PC-3 (cell line): ENCODE measurements at regions of chr1 and their contacts with region 1.

Region 1: DNA sequence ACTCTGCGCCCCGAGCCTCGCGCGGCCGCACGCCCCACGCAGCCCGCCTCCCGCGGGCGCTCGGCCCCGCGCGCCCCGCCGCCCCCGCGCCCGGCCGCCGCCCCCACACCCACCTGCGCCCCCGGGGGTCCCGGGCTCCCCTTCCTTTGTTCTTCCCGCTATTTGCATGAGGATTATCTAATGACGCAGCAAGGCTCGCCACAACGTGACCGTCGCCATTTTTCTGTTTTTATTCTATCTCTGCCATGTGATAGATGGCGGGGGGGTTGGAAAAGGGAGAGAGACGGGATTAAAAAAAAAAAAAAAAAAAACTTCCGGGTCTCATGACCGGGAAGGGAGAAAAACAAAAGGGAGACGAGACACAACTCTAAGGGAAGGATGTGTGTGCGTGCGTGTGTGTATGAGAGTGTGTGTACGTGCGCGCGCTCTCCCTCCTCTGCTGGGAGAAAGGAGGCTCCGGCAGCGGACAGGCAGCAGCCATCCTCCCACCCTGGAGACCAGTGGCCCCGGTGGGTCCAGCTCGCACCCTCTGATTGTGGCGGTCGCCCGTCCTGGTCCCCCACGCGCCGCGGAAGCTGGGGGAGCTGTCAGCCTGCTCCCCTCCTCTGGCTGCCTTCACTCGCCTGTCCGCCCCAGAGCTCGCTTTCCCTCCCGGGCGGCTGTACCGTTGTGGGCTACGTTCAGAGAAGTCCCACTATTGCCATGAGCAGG is 80.4 kb upstream of the AK4 start:
- DNase-seq: peak; percentile 50
- ATAC-seq: peak; percentile 34
- H3K4me3 ChIP-seq: peak overlapping the region; percentile 79
- H3K27ac ChIP-seq: no peak overlapping the region
- H3K4me1 ChIP-seq: peaks cover 8% of the 10 kb centered on the region; the same call in 1 of the 2 replicates
- H3K27me3 ChIP-seq: no peaks in the 10 kb centered on the region
- CTCF ChIP-seq: no peak

Region 2: DNA sequence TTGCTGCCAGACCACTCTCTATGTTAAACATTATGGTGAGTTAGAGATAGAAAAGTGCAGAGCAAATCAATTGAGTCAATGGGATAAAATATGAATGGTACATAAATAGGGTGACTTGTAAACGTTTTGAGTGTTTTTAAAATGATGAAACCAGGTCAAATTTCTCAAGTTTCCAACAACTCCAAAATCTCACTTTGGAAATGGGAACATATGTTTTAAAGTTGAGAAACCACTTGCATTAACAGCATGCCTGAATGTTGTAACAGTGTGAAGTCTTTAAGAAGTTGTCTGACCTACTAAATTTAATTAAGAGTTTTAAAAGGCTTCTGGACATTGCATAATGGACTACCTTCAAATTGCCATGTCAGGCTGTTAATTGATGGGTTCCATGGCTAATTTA is 356.4 kb before region 1 on chr1:
- CTCF ChIA-PET with region 1: no interaction called
- POLR2A ChIA-PET with region 1: no interaction called
- intact Hi-C with region 1: no loop called
- DNase-seq: no peak
- ATAC-seq: no peak
- H3K4me3 ChIP-seq: no peak overlapping the region
- H3K27ac ChIP-seq: no peak overlapping the region
- H3K4me1 ChIP-seq: no peaks in the 10 kb centered on the region
- H3K27me3 ChIP-seq: no peaks in the 10 kb centered on the region
- CTCF ChIP-seq: no peak

Region 3: GRCh38 chr1:65243491-65243890 is 175.8 kb after region 1 on chr1:
- CTCF ChIA-PET with region 1: no interaction called
- POLR2A ChIA-PET with region 1: no interaction called
- intact Hi-C with region 1: no loop called
- DNase-seq: no peak
- ATAC-seq: no peak
- H3K4me3 ChIP-seq: no peak overlapping the region
- H3K27ac ChIP-seq: no peak overlapping the region
- H3K4me1 ChIP-seq: peaks cover 8% of the 10 kb centered on the region; the same call in 1 of the 2 replicates
- H3K27me3 ChIP-seq: no peaks in the 10 kb centered on the region
- CTCF ChIP-seq: no peak

Region 4: DNA sequence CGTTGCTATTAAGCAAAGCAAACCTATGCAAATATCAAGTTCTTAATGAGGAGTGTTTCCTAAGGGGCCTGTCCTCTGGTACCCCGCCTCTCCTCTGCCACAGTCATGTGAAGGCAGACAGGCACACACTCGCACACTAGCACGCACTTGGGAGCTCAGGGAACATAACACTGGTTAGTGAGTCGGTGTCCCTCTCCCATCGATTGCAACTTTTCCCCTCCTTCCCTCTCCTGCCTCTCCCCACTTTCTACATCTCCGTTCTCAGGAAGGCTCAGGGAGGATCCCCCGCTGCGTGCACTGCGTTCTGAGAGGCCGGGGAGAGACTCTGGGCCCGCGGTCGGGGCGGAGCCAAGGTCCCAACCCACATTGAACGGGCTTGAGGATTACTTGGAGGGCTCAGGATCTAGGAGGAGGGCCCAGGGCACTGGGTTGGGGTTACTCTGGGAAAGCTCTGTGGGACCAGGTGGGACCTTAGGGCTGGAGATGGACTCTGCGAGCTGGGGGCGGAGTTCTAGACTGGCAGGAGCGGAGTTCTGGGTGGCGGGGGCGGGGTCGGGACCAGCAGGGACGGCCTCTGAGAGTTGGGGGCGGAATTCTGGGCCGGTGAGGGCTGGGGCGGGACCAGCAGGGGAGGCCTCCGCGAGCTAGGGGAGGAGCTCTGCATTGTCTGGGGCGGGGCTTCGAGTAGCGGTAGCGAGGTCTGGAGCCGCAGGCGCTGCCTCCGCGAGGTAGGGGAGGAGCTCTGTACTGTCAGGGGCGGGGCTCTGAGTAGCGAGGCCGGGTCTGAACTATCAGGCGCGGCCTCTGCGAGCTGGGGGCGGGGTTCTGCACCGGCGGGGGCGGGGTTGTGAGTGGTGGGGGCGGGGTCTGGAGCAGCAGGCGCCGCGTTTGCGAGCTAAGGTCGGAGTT is 352.3 kb after region 1 on chr1:
- CTCF ChIA-PET with region 1: no interaction called
- POLR2A ChIA-PET with region 1: no interaction called
- intact Hi-C with region 1: loop called (anchors 5 kb)
- DNase-seq: peak; percentile 98
- ATAC-seq: peak; percentile 86
- H3K4me3 ChIP-seq: peak overlapping the region; percentile 86
- H3K27ac ChIP-seq: peak overlapping the region; percentile 2
- H3K4me1 ChIP-seq: peaks cover 54% of the 10 kb centered on the region
- H3K27me3 ChIP-seq: no peaks in the 10 kb centered on the region
- CTCF ChIP-seq: no peak

Region 5: DNA sequence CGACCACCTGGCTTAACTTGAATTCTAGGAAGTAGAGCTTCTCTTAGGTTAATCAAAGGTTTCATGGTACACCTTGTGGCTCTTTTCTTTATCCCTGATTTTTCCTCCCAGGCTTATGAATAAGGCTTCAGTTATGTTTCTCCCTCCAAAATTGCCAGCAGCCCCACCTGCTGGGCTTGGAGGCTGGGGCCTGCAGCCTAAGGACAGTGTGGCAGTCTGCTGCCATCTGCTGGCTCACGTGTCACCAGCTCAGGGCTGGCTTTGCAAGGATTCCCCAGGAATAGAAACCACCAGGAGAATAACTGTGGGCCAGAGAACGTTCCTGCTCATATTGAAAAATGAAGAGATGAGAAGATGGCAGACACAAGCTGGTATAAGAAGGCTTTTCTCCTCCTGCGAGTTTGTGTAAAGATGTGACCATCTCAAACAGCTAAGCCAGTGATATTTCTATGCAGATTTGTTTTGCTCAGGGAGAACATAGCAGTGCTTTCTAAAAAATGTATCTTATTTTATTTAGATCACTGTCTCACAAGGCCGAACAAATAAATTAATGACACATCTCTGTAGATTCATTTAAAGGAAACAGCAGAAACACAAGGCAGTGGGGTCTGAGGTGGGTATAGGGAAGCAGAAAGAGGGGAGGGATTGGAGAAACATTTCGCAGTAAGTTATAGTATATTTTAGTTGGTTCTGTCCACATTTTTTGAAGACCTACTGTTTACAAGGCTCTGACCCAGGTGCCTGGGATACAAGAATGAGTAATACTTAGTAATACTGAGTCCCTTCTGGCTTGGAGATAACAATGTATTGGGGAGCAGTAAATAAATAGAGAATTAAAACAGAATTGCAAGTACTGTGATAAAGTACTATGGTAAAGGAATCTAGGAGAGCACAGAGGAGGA is 1175.3 kb after region 1 on chr1:
- CTCF ChIA-PET with region 1: no interaction called
- POLR2A ChIA-PET with region 1: no interaction called
- intact Hi-C with region 1: loop called (anchors 10 kb)
- DNase-seq: peak; percentile 94
- ATAC-seq: peak; percentile 97
- H3K4me3 ChIP-seq: no peak overlapping the region
- H3K27ac ChIP-seq: no peak overlapping the region
- H3K4me1 ChIP-seq: peaks cover 15% of the 10 kb centered on the region
- H3K27me3 ChIP-seq: peaks cover under 1% of the 10 kb centered on the region; the same call in 1 of the 2 replicates
- CTCF ChIP-seq: peak; percentile 100